Activated T-helper 1 cell treated with anti-CD3 and anti-CD28 coated beads, Interleukin-12 subunit alpha, Interleukin-12 subunit beta, Interleukin-2, Interleukin-4 antibody, amounts not matched to agents 30 ng/mL and 10 ng/mL and 1 ng/mL, durations not matched to agents 14 hours and 24 hours and 36 hours (primary cell): ENCODE measurements at regions of chr2 and their contacts with region 1.

Region 1: GRCh38 chr2:165675551-165675968 is 118.5 kb downstream of the GALNT3 start:
- DNase-seq: no peak
- H3K4me3 Mint-ChIP-seq: no peak overlapping the region
- H3K27ac Mint-ChIP-seq: no peak overlapping the region
- H3K4me1 Mint-ChIP-seq: no peaks in the 10 kb centered on the region
- H3K27me3 Mint-ChIP-seq: peaks cover 1% of the 10 kb centered on the region

Region 2: DNA sequence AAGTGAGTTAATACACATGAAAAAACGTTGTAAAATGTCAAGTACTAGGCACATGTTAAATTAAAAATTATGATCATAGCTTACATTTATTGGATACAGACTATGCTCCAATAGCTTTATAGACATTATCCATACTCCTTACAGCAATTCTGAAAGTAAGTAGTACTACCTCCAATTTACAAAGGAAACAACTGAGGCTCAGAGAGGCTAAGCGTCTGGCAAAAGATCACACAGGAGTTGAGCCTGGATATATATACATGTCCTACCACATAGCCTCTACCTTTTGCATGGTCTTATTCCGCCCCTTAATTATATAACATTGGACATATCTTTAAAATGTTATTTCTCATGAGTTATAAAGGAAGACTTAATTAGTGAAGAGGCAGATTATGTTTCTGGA is 78.8 kb before region 1 on chr2:
- intact Hi-C with region 1: loop called (anchors 2 kb)
- DNase-seq: no peak
- H3K4me3 Mint-ChIP-seq: no peak overlapping the region
- H3K27ac Mint-ChIP-seq: no peak overlapping the region
- H3K4me1 Mint-ChIP-seq: no peaks in the 10 kb centered on the region
- H3K27me3 Mint-ChIP-seq: peaks cover 1% of the 10 kb centered on the region